K562 (cell line): ENCODE measurements at regions of chr12 and their contacts with region 1.

Region 1: DNA sequence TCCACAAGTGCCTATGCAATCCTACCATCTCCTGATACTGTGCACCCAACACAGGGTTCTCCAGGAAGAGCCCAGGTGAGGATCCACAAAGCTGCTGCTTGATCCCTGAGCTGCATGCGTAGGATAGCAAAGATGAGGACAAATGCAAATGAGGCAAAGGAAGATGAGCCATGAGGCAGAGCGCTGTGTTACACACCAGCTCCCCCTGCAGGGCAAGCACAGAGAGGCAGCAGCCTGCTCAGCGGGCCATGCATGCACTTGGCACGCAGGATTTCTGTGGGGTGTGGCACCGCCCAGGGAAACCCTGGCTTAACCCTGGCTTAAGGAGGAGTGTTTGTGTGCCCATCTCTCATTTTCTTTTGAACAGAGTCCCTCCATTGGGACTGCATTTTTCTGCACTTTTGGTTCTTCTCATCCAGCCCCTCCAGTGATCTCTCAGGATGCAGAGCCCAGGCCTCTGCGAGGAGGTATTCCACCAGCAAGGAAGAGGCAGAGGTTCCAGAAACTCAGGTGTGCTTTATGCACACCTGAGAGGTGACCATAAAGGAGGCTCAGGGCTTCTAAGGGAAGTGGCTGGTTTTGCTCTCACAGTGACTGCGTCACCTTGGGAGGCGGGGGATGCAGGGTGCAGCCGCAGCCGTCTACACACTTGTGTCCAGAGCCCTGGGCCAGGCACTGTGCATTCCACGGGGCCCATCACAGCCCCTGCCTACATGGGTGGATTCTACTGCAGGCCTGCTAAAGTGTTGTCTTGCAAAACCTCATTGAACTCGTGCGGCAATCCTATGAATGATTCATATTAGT is 973.3 kb upstream of the TMEM132C start:
- DNase-seq: peak; percentile 62 to 79 (median 65)
- ATAC-seq: peak; percentile 97
- H3K4me3 ChIP-seq: no peak overlapping the region
- H3K27ac ChIP-seq: no peak overlapping the region
- H3K4me1 ChIP-seq: peaks cover 3 to 12% of the 10 kb centered on the region in 2 experiments; a peak in 3 of 5 replicates
- H3K27me3 ChIP-seq: peaks cover 6 to 13% of the 10 kb centered on the region in 2 experiments; a peak in 3 of 5 replicates
- CTCF ChIP-seq: peak; percentile 90 to 97 (median 91)
- EP300 ChIP-seq: no peak
- POLR2A ChIP-seq: no peak
- RAD21 ChIP-seq: peak; percentile 69 to 91

Region 2: GRCh38 chr12:126784328-126784921 is 509.3 kb before region 1 on chr12:
- CTCF ChIA-PET with region 1: no interaction called
- POLR2A ChIA-PET with region 1: interaction called, 3 read pairs
- in situ Hi-C with region 1: no loop called
- intact Hi-C with region 1: loop called (anchors 1 kb)
- DNase-seq: peak; percentile 31 to 79 (median 47)
- ATAC-seq: peak; percentile 93
- H3K4me3 ChIP-seq: no peak overlapping the region
- H3K27ac ChIP-seq: no peak overlapping the region
- H3K4me1 ChIP-seq: no peaks in the 10 kb centered on the region; a peak in 2 of 5 replicates
- H3K27me3 ChIP-seq: peaks cover 0 to 4% of the 10 kb centered on the region in 2 experiments; a peak in 3 of 5 replicates
- CTCF ChIP-seq: peak; percentile 87 to 94 (median 92)
- EP300 ChIP-seq: no peak
- POLR2A ChIP-seq: no peak
- RAD21 ChIP-seq: peak; percentile 72 to 88

Region 3: DNA sequence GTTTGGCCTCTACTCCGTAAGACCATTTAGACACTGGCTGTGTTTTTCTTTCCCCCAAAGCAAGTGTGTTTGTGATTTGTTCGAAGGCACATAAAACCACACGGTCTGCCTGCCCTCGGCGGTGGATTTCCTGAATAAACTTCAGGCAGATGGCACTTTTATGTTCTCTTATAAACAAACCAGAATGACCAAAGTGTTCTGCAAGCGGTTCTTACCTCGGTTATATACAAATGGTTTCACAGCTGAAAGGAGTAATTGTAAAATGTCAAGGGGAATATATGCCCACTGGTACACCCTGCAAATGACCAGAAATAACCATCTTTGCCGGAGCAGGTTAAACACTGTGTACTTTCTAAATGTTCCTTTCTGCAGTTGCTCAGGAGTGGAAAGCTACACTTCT is 502.6 kb before region 1 on chr12:
- CTCF ChIA-PET with region 1: no interaction called
- POLR2A ChIA-PET with region 1: no interaction called
- in situ Hi-C with region 1: loop called (anchors 10 kb)
- intact Hi-C with region 1: no loop called
- DNase-seq: no peak
- ATAC-seq: no peak
- H3K4me3 ChIP-seq: no peak overlapping the region
- H3K27ac ChIP-seq: no peak overlapping the region
- H3K4me1 ChIP-seq: no peaks in the 10 kb centered on the region; a peak in 1 of 5 replicates
- H3K27me3 ChIP-seq: peaks cover 0 to 10% of the 10 kb centered on the region in 2 experiments; a peak in 2 of 5 replicates
- CTCF ChIP-seq: no peak
- EP300 ChIP-seq: no peak
- POLR2A ChIP-seq: no peak
- RAD21 ChIP-seq: no peak

Region 4: DNA sequence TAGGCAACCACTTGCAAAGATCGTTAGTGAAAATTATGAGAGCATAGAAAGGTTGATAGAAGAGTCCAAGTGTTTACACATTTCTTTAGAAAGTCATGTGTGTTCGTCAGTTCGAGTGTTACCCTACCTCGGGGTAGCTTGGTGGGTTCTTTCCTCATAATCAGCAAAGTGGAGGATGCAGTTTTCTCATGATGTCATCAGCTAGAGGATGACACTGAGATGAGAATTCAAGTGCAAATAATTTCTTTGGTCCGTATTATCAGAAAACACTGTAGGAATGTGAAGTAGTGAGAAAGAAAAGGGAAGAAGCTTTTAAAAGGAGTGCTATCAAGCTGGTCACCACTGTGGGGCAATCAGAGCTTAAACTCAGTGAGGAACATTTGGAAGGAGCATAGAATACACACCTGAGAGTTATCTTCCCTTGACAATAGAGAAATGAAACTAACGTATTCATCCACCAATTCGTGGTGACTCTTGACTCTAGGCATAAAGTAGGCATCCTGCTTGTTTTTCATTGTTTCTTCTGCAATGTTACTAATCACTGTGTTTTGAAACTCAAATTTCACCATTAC is 367.6 kb before region 1 on chr12:
- CTCF ChIA-PET with region 1: no interaction called
- POLR2A ChIA-PET with region 1: no interaction called
- in situ Hi-C with region 1: no loop called
- intact Hi-C with region 1: loop called (anchors 1 kb)
- DNase-seq: peak in 1 of 4 experiments; percentile 39
- ATAC-seq: peak; percentile 86
- H3K4me3 ChIP-seq: no peak overlapping the region
- H3K27ac ChIP-seq: no peak overlapping the region
- H3K4me1 ChIP-seq: no peaks in the 10 kb centered on the region; a peak in 1 of 5 replicates
- H3K27me3 ChIP-seq: no peaks in the 10 kb centered on the region
- CTCF ChIP-seq: peak in 2 of 3 experiments; percentile 16 to 57; a peak in 3 of 6 replicates
- EP300 ChIP-seq: no peak
- POLR2A ChIP-seq: no peak
- RAD21 ChIP-seq: peak; percentile 59 to 78

Region 5: DNA sequence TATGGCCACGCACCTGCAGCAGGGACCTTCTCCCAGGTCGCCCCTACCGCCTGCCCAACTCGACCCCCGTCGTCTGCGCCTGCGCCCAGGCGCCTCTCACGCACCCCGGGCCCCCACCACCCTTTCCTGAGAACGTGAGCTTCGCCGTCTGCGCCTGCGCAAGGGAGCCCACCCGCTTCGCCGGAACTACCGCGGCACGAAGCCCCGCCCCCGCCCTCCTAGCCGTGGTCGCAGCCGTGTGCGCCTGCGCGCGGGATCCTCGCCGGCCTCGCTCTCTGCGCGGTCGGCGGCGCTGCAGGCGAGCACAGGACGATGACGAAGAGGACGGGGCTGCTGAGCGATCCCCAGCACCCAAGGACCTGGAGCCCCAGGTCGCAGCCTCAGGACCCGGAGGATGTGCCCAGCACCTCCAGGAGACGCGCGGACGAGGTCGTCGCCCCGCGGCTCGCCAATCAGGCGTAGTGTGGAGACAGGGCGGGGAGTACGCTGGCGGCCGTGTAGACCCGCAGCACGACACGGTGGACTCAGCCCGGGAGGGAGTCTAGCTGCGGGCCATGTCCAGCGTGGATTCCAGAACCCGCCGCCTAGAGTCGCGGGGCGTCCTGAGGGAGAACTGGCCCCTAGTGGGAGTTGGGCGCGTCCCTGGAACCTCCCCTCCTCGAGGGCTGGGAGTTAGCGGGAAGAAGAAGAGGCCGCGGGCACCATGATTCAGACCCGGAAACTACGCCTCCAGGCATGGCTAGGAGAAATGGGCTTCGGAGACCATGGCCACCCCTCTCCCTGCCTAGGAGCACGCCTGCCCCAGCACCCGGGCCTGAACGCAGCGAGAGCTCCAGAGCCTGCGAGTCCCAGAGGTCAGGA is 147.6 kb before region 1 on chr12:
- CTCF ChIA-PET with region 1: no interaction called
- POLR2A ChIA-PET with region 1: no interaction called
- in situ Hi-C with region 1: no loop called
- intact Hi-C with region 1: loop called (anchors 5 kb)
- DNase-seq: peak; percentile 92 to 96 (median 94)
- ATAC-seq: peak; percentile 90
- H3K4me3 ChIP-seq: peak overlapping the region; percentile 73
- H3K27ac ChIP-seq: peak overlapping the region; percentile 95
- H3K4me1 ChIP-seq: peaks cover 10 to 18% of the 10 kb centered on the region in 2 experiments; a peak in 4 of 5 replicates
- H3K27me3 ChIP-seq: no peaks in the 10 kb centered on the region
- CTCF ChIP-seq: peak in 1 of 3 experiments; percentile 14; a peak in 1 of 6 replicates
- EP300 ChIP-seq: no peak
- POLR2A ChIP-seq: peak; percentile 90
- RAD21 ChIP-seq: no peak

Region 6: GRCh38 chr12:127355061-127355841 is 61.5 kb after region 1 on chr12:
- CTCF ChIA-PET with region 1: no interaction called
- POLR2A ChIA-PET with region 1: no interaction called
- in situ Hi-C with region 1: no loop called
- intact Hi-C with region 1: loop called (anchors 5 kb)
- DNase-seq: peak; percentile 39 to 53 (median 49)
- ATAC-seq: peak; percentile 94
- H3K4me3 ChIP-seq: no peak overlapping the region
- H3K27ac ChIP-seq: no peak overlapping the region
- H3K4me1 ChIP-seq: no peaks in the 10 kb centered on the region
- H3K27me3 ChIP-seq: no peaks in the 10 kb centered on the region
- CTCF ChIP-seq: peak; percentile 51 to 74 (median 70)
- EP300 ChIP-seq: no peak
- POLR2A ChIP-seq: no peak
- RAD21 ChIP-seq: peak; percentile 44 to 61